Ascending aorta (tissue), 2 donors: ENCODE measurements at regions of chr1 and their contacts with region 1.

Region 1: DNA sequence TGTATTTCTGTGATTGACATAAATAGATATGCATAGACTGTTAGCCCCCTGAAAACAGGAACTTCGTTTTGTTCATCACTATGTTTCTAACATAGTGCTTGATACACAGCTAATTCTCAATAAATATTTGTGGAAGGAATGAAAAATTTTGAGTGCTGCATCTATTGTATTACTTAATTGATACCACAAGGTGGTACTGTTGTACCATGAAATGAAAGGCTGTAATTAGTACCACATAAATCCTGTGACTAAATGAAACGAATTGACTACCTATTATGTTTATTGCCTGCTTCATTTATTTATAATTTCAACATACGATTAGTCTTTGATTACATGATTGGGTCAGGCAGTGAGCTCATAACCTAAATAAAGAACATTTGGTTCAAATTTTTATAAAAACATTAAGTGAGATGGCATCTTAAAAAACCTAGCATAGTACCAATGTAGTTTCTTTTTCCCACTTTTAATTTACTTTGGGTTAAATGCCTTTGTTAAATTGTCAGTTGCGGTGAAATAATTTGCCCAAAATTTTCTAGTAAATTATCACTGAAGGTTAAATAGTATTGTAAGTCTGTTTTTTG is 15.0 kb upstream of the TGFB2 start:
- DNase-seq: no peak
- H3K4me3 ChIP-seq: no peak overlapping the region
- H3K27ac ChIP-seq: no peak overlapping the region
- H3K4me1 ChIP-seq: no peaks in the 10 kb centered on the region
- H3K27me3 ChIP-seq: no peaks in the 10 kb centered on the region
- CTCF ChIP-seq: peak; percentile 56 to 69 (median 61)

Region 2: DNA sequence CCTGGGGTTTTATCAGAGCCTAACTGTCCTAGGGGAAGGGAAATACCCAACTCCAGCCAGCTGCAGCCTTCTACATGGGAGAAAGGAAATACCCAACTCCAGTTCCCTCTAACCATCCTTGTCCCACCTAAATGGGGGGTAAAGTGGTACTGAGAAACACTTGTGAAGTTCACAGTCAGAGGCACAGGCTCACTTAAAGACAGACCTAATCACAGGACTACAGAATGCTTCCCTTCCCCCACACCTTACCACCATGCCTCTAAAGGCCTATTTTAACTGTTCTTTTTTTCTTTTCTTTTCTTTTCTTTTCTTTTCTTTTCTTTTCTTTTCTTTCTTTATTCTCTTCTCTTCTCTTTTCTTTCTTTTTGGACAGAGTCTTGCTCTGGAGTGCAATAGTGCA is 374.4 kb before region 1 on chr1:
- intact Hi-C with region 1: no loop called
- DNase-seq: no peak
- H3K4me3 ChIP-seq: no peak overlapping the region
- H3K27ac ChIP-seq: no peak overlapping the region
- H3K4me1 ChIP-seq: no peaks in the 10 kb centered on the region
- H3K27me3 ChIP-seq: no peaks in the 10 kb centered on the region
- CTCF ChIP-seq: no peak

Region 3: DNA sequence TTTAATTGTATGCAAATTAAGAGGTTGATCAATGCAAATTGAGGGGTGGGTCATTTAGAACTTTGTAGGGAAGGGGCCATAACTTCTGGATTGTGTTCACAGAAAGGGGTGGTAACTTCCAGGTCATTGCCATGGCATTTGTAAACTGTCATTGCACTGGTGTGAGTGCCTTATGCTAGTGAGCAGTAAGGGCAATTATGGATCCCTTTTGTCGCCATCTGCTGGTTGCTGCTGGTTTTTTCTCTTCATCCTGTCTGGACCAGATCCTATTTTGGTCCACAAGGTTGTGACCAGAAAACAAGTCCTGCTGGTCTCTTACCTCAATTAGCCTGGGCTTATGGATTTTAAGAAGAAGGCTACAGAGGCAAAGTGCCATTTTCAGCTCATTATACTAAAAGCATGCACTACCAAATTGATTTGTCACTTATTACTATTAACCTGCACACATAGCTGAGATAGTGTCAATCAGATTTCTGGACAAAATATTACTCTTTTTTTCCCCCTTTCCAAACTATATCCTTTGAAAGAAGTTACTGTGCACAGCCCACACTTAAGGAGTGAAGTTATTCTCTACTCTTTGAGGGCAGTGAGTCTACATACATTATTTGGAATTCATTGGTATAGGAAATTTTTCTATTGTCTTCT is 1086.6 kb after region 1 on chr1:
- intact Hi-C with region 1: loop called (anchors 10 kb)
- DNase-seq: peak in 1 of 2 donors; percentile 69
- H3K4me3 ChIP-seq: no peak overlapping the region
- H3K27ac ChIP-seq: no peak overlapping the region
- H3K4me1 ChIP-seq: no peaks in the 10 kb centered on the region
- H3K27me3 ChIP-seq: no peaks in the 10 kb centered on the region
- CTCF ChIP-seq: peak in 2 of 3 experiments; percentile 41 to 51

Region 4: GRCh38 chr1:219566951-219567947 is 1237.1 kb after region 1 on chr1:
- intact Hi-C with region 1: loop called (anchors 5 kb)
- DNase-seq: no peak
- H3K4me3 ChIP-seq: no peak overlapping the region
- H3K27ac ChIP-seq: no peak overlapping the region
- H3K4me1 ChIP-seq: no peaks in the 10 kb centered on the region
- H3K27me3 ChIP-seq: no peaks in the 10 kb centered on the region
- CTCF ChIP-seq: peak; percentile 27 to 53 (median 28)

Region 5: GRCh38 chr1:219660666-219661463 is 1330.7 kb after region 1 on chr1:
- intact Hi-C with region 1: loop called (anchors 5 kb)
- DNase-seq: peak; percentile 25 to 90
- H3K4me3 ChIP-seq: peak overlapping the region in 1 of 2 donors; percentile 43
- H3K27ac ChIP-seq: no peak overlapping the region
- H3K4me1 ChIP-seq: peaks cover 0 to 2% of the 10 kb centered on the region in 2 donors
- H3K27me3 ChIP-seq: no peaks in the 10 kb centered on the region
- CTCF ChIP-seq: peak; percentile 46 to 84 (median 53)